ENCODE measurements at regions of chr9 and their contacts with region 1.

Region 1: DNA sequence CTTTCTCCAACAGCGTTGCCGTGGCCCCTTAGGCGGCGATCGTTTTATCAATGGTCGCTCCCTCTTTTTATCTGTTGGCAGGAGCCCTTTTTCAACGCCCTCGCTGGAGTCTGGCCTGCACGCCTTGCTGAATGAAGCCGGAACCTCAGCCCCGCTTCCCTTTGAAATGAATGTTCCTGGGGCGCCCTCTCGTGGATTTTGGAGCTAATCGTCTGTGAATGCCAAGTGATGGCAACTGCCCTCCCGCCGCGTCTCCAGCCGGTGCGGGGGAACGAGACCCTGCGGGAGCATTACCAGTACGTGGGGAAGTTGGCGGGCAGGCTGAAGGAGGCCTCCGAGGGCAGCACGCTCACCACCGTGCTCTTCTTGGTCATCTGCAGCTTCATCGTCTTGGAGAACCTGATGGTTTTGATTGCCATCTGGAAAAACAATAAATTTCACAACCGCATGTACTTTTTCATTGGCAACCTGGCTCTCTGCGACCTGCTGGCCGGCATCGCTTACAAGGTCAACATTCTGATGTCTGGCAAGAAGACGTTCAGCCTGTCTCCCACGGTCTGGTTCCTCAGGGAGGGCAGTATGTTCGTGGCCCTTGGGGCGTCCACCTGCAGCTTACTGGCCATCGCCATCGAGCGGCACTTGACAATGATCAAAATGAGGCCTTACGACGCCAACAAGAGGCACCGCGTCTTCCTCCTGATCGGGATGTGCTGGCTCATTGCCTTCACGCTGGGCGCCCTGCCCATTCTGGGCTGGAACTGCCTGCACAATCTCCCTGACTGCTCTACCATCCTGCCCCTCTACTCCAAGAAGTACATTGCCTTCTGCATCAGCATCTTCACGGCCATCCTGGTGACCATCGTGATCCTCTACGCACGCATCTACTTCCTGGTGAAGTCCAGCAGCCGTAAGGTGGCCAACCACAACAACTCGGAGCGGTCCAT is 10.0 kb downstream of the S1PR3 start:
- DNase-seq: peak; percentile 79
- ATAC-seq: peak; percentile 76
- H3K4me3 ChIP-seq: peak overlapping the region; percentile 49; the same call in 1 of the 2 replicates
- H3K27ac ChIP-seq: no peak overlapping the region
- H3K4me1 ChIP-seq: no peaks in the 10 kb centered on the region
- H3K27me3 ChIP-seq: no peaks in the 10 kb centered on the region
- CTCF ChIP-seq: peak; percentile 75

Region 2: GRCh38 chr9:87950765-87951488 is 1050.3 kb before region 1 on chr9:
- CTCF ChIA-PET with region 1: interaction called, 4 read pairs
- POLR2A ChIA-PET with region 1: no interaction called
- intact Hi-C with region 1: loop called (anchors 10 kb)
- DNase-seq: peak; percentile 66
- ATAC-seq: peak; percentile 57
- H3K4me3 ChIP-seq: no peak overlapping the region
- H3K27ac ChIP-seq: no peak overlapping the region
- H3K4me1 ChIP-seq: no peaks in the 10 kb centered on the region
- H3K27me3 ChIP-seq: no peaks in the 10 kb centered on the region
- CTCF ChIP-seq: peak; percentile 68

Region 3: GRCh38 chr9:89497978-89498851 is 497.0 kb after region 1 on chr9 and contains the start of gene SEMA4D:
- CTCF ChIA-PET with region 1: no interaction called
- POLR2A ChIA-PET with region 1: no interaction called
- intact Hi-C with region 1: no loop called
- DNase-seq: peak; percentile 58
- ATAC-seq: peak; percentile 71
- H3K4me3 ChIP-seq: peak within 1 kb of the TSS; percentile 64
- H3K27ac ChIP-seq: no peak within 1 kb of the TSS
- H3K4me1 ChIP-seq: peaks cover 9% of the 10 kb centered on the region; the same call in 1 of the 2 replicates
- H3K27me3 ChIP-seq: no peaks in the 10 kb centered on the region
- CTCF ChIP-seq: no peak
- total RNA-seq, gene SEMA4D: 5.0 and 8.0 TPM in 2 replicates

Measured in PC-3 (cell line).